Activated naive CD4-positive, alpha-beta T cell treated with anti-CD3 and anti-CD28 coated beads for 36 hours (primary cell): ENCODE measurements at regions of chr7 and their contacts with region 1.

Region 1: GRCh38 chr7:134458806-134459698 is at the start of gene AKR1B1:
- DNase-seq: peak; percentile 90
- H3K4me3 Mint-ChIP-seq: peak within 1 kb of the TSS; percentile 81
- H3K27ac Mint-ChIP-seq: peak within 1 kb of the TSS; percentile 70
- H3K4me1 Mint-ChIP-seq: peaks cover 46% of the 10 kb centered on the region
- H3K27me3 Mint-ChIP-seq: no peaks in the 10 kb centered on the region
- total RNA-seq, gene AKR1B1: 103 to 107 TPM

Region 2: DNA sequence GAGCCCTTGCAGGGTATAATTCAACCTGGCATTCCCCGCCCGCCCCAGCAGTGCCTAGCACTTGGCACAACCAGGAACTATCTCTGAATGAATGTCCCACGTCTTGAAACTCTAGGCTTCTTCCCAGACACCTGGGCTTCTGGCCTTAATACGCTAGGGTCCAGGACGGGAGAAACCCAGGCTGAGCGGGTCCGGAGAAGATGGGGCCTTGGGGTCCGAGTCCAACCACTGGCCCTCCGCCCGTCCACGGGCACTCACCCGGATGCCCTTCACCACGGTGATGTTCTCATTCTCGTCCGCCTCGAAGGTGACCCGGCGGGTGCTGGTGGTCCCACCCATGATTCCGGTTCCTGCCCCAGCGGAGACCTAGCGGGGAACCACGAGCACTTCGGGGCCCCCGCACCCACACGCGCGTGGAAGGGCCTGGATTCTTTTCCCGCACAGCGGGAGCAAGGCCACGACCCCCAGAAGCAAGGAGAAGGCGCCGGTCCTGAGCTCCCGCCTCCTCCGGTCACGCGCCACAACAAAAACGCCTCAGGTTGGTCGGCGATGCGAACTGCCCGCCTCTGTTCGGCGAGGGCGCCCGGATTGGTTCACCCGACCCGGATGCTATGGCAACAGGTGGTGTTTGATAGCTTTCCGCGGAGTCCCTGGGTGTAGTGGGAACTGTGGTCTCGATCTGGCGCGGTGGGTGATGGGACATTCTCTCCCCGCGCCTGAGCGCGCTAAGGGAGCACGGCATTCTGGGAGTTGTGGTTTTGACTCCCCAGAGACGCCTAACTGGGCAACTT is 1377.3 kb before region 1 on chr7 and contains the start of gene CHCHD3:
- CTCF ChIA-PET with region 1: no interaction called
- intact Hi-C with region 1: loop called (anchors 1 kb)
- DNase-seq: peak; percentile 99
- H3K4me3 Mint-ChIP-seq: peak within 1 kb of the TSS; percentile 78
- H3K27ac Mint-ChIP-seq: peak within 1 kb of the TSS; percentile 78
- H3K4me1 Mint-ChIP-seq: peaks cover 27% of the 10 kb centered on the region
- H3K27me3 Mint-ChIP-seq: no peaks in the 10 kb centered on the region
- total RNA-seq, gene CHCHD3: 62.0 to 65.0 TPM

Region 3: GRCh38 chr7:133936074-133936473 is 523.0 kb before region 1 on chr7:
- CTCF ChIA-PET with region 1: no interaction called
- intact Hi-C with region 1: no loop called
- DNase-seq: no peak
- H3K4me3 Mint-ChIP-seq: no peak overlapping the region
- H3K27ac Mint-ChIP-seq: no peak overlapping the region
- H3K4me1 Mint-ChIP-seq: no peaks in the 10 kb centered on the region
- H3K27me3 Mint-ChIP-seq: no peaks in the 10 kb centered on the region

Region 4: GRCh38 chr7:134432296-134433152 is 26.5 kb before region 1 on chr7:
- CTCF ChIA-PET with region 1: interaction called, 17 read pairs
- intact Hi-C with region 1: loop called (anchors 1 kb)
- DNase-seq: peak; percentile 82
- H3K4me3 Mint-ChIP-seq: peak overlapping the region; percentile 72
- H3K27ac Mint-ChIP-seq: peak overlapping the region; percentile 79
- H3K4me1 Mint-ChIP-seq: peaks cover 7% of the 10 kb centered on the region
- H3K27me3 Mint-ChIP-seq: no peaks in the 10 kb centered on the region

Region 5: GRCh38 chr7:134547397-134548054 is 88.5 kb after region 1 on chr7:
- CTCF ChIA-PET with region 1: no interaction called
- intact Hi-C with region 1: loop called (anchors 1 kb)
- DNase-seq: peak; percentile 82
- H3K4me3 Mint-ChIP-seq: no peak overlapping the region
- H3K27ac Mint-ChIP-seq: no peak overlapping the region
- H3K4me1 Mint-ChIP-seq: peaks cover 3% of the 10 kb centered on the region
- H3K27me3 Mint-ChIP-seq: peaks cover 9% of the 10 kb centered on the region

Region 6: GRCh38 chr7:134811765-134812164 is 352.7 kb after region 1 on chr7:
- CTCF ChIA-PET with region 1: no interaction called
- intact Hi-C with region 1: no loop called
- DNase-seq: no peak
- H3K4me3 Mint-ChIP-seq: no peak overlapping the region
- H3K27ac Mint-ChIP-seq: no peak overlapping the region
- H3K4me1 Mint-ChIP-seq: no peaks in the 10 kb centered on the region
- H3K27me3 Mint-ChIP-seq: no peaks in the 10 kb centered on the region

Region 7: GRCh38 chr7:134865001-134865845 is 406.2 kb after region 1 on chr7:
- CTCF ChIA-PET with region 1: no interaction called
- intact Hi-C with region 1: loop called (anchors 10 kb)
- DNase-seq: peak; percentile 62
- H3K4me3 Mint-ChIP-seq: peak overlapping the region; percentile 65
- H3K27ac Mint-ChIP-seq: peak overlapping the region; percentile 77
- H3K4me1 Mint-ChIP-seq: peaks cover 39% of the 10 kb centered on the region
- H3K27me3 Mint-ChIP-seq: no peaks in the 10 kb centered on the region

Region 8: DNA sequence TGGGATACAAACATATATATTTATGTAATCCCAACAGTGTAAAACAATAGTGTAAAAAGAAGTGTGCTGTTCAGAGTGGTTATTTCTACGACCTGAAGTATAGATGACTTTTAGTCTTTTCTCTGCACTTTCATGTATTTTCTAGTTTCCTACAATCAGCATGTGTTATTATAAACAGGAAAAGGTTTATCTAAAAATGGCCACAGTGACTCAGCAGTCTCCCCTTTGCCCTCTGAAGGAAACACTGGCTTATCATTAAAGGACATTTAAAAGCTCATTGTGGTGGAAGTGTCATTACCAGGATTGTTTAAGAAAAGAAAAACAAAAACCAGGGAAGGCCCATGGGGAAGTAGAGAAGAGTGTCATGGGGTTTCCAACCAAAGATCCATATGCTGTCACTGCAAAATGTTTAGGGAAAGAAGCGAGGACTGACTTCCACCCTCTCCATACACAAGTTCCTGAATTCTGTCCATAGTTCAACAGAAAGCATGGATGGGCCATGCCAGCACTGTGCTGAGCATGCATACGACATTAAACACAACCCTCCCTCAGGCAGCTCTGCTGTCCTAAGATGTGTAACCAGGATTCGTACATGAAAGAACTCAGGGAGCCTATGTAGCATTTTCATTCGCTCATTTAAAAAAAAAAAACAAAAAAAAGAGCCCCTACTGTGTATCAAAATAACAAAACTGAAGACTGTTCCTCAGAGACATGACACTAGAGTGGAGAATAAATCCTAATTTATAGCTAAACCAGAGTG is 701.2 kb after region 1 on chr7:
- CTCF ChIA-PET with region 1: no interaction called
- intact Hi-C with region 1: loop called (anchors 5 kb)
- DNase-seq: peak; percentile 34
- H3K4me3 Mint-ChIP-seq: no peak overlapping the region
- H3K27ac Mint-ChIP-seq: peak overlapping the region; percentile 90
- H3K4me1 Mint-ChIP-seq: peaks cover 34% of the 10 kb centered on the region
- H3K27me3 Mint-ChIP-seq: no peaks in the 10 kb centered on the region

Region 9: GRCh38 chr7:135977007-135977741 is 1518.1 kb after region 1 on chr7 and contains the start of gene MTPN:
- CTCF ChIA-PET with region 1: no interaction called
- intact Hi-C with region 1: loop called (anchors 10 kb)
- DNase-seq: peak; percentile 98
- H3K4me3 Mint-ChIP-seq: peak within 1 kb of the TSS; percentile 98
- H3K27ac Mint-ChIP-seq: peak within 1 kb of the TSS; percentile 86
- H3K4me1 Mint-ChIP-seq: peaks cover 71% of the 10 kb centered on the region
- H3K27me3 Mint-ChIP-seq: no peaks in the 10 kb centered on the region
- total RNA-seq, gene MTPN: 106 to 108 TPM